CD4-positive, alpha-beta T cell (primary cell): ENCODE measurements at regions of chr9 and their contacts with region 1.

Region 1: GRCh38 chr9:7008411-7008810 is 250.6 kb downstream of the KDM4C start:
- DNase-seq: peak in 1 of 14 experiments; percentile 8
- ATAC-seq: no peak
- H3K4me3 ChIP-seq: no peak overlapping the region
- H3K4me3 Mint-ChIP-seq: no peak overlapping the region
- H3K27ac ChIP-seq: no peak overlapping the region
- H3K27ac Mint-ChIP-seq: no peak overlapping the region
- H3K4me1 ChIP-seq: no peaks in the 10 kb centered on the region
- H3K4me1 Mint-ChIP-seq: peaks cover 5% of the 10 kb centered on the region
- H3K27me3 ChIP-seq: no peaks in the 10 kb centered on the region
- H3K27me3 Mint-ChIP-seq: no peaks in the 10 kb centered on the region
- CTCF ChIP-seq: no peak

Region 2: DNA sequence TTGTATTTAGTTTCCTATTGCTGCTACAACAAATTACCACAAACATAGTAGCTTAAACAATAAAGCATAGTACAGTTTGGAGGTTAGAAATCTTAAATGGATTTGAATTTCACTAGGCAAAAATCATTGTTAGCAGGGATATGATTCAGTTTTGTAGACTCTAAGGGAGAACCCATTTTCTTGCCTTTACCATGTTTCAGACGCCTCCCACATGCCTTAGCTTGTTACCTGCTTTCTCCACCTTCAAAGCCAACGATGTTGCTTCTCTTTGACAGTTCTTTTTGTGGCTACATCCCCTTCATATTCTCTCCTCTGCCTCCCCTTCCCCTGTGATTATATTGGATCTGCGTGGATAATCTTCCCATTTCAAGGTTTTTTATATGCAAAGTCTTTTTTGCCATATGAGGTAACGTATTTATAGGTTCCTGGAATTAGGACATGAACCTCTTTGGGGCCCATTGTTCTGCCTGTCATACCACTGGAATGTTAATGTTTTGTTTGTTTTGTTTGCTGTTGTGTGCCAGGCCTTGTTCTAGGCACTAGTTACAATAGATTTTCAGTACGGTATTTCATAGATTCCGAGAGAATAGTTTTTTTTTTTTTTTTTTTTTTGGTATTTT is 541.3 kb before region 1 on chr9:
- CTCF ChIA-PET with region 1: no interaction called
- POLR2A ChIA-PET with region 1: no interaction called
- intact Hi-C with region 1: loop called in 1 of 2 experiments (anchors 10 kb)
- DNase-seq: no peak
- ATAC-seq: no peak
- H3K4me3 ChIP-seq: no peak overlapping the region
- H3K4me3 Mint-ChIP-seq: no peak overlapping the region
- H3K27ac ChIP-seq: no peak overlapping the region
- H3K27ac Mint-ChIP-seq: no peak overlapping the region
- H3K4me1 ChIP-seq: no peaks in the 10 kb centered on the region
- H3K4me1 Mint-ChIP-seq: peaks cover 40% of the 10 kb centered on the region
- H3K27me3 ChIP-seq: no peaks in the 10 kb centered on the region
- H3K27me3 Mint-ChIP-seq: no peaks in the 10 kb centered on the region
- CTCF ChIP-seq: no peak

Region 3: DNA sequence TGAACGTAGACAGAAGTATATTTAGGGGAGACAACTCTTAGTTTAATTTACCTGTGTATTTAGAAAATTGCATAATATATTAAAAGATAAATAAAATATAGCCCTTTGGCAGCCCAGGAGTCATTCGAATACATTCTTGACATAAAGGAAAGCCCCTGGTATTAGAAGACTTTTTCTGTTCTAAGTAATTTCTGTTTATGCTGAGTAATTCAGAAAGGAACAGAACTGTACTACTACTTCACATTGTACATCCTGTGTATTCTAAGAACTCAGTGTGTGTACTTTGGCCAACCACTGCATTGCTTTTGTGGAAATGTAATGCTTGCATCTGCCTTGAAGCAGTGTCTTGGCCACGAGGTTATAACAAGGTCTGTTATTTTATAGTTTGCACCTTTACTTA is 114.3 kb before region 1 on chr9:
- CTCF ChIA-PET with region 1: no interaction called
- POLR2A ChIA-PET with region 1: no interaction called
- intact Hi-C with region 1: no loop called
- DNase-seq: no peak
- ATAC-seq: no peak
- H3K4me3 ChIP-seq: no peak overlapping the region
- H3K4me3 Mint-ChIP-seq: no peak overlapping the region
- H3K27ac ChIP-seq: no peak overlapping the region
- H3K27ac Mint-ChIP-seq: no peak overlapping the region
- H3K4me1 ChIP-seq: peaks cover 5% of the 10 kb centered on the region
- H3K4me1 Mint-ChIP-seq: peaks cover 65% of the 10 kb centered on the region
- H3K27me3 ChIP-seq: no peaks in the 10 kb centered on the region
- H3K27me3 Mint-ChIP-seq: no peaks in the 10 kb centered on the region
- CTCF ChIP-seq: no peak